GM10248 (cell line): ENCODE measurements at regions of chr3 and their contacts with region 1.

Region 1: GRCh38 chr3:196528639-196529233 is 13.6 kb upstream of the SMCO1 start:
- DNase-seq: peak; percentile 91
- CTCF ChIP-seq: peak; percentile 82

Region 2: GRCh38 chr3:196251918-196252317 is 276.8 kb before region 1 on chr3:
- CTCF ChIA-PET with region 1: interaction called, 14 read pairs
- POLR2A ChIA-PET with region 1: no interaction called
- DNase-seq: no peak
- CTCF ChIP-seq: no peak

Region 3: DNA sequence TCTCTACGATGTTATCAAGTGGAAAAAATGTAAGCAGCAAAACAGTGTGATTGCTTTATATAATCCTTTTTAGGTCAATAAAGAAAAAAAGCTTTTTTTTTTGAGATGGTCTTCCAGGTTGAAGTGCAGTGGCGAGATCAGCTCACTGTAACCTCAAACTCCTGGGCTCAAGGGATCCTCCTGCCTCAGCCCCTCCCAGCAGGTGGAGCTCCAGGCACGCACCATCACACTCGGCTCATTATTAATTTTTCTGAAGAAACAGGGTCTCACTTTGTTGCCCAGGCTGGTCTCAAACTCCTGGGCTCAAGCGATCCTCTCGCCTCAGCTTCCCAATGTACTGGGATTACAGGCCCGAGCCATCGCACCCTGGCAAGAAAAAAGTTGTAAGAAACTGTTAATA is 42.5 kb before region 1 on chr3:
- CTCF ChIA-PET with region 1: interaction called, 11 read pairs
- POLR2A ChIA-PET with region 1: no interaction called
- DNase-seq: no peak
- CTCF ChIP-seq: peak; percentile 56

Region 4: DNA sequence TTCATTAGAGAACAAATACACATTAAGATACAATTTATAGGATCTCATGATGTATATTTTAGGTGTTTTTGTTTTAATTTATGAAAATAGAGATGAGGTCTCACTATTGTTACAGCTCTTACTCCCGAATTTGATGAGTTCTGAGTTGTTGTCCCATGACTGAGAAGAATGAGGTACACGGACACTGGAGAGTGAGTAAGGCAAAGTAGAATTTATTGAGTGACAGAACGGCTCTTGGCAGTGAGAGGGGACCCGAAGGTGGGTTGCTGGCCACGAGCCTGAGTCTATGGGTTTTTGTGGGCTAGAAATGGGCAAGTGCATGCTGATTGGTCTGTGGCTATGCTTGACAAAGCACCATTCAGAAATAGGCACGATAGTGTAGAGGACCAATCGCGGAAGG is 22.0 kb before region 1 on chr3:
- CTCF ChIA-PET with region 1: interaction called, 30 read pairs
- POLR2A ChIA-PET with region 1: interaction called, 4 read pairs
- DNase-seq: no peak
- CTCF ChIP-seq: no peak

Region 5: GRCh38 chr3:196513697-196514349 is 14.9 kb before region 1 on chr3:
- CTCF ChIA-PET with region 1: interaction called, 13 read pairs
- POLR2A ChIA-PET with region 1: no interaction called
- DNase-seq: no peak
- CTCF ChIP-seq: no peak

Region 6: DNA sequence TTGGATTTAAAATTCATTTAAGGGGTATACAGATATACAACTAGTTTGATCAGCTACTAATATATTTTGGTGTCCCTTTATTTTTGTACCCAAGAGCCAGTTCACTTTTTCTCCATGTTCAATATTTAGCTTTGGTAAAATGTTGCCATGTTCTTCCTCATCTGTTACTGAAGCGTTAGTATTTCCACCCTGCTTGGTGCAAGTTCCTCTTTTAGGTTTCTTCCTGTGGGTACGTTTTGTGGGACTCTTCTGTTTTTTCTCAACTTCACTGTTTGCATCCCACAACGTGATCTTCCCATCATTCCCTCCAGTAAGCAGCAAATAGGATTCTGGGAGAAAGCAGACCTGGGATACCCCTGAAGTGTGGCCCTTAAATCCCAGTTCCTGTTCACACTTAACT is 25.5 kb after region 1 on chr3:
- CTCF ChIA-PET with region 1: interaction called, 16 read pairs
- POLR2A ChIA-PET with region 1: no interaction called
- DNase-seq: no peak
- CTCF ChIP-seq: no peak

Region 7: DNA sequence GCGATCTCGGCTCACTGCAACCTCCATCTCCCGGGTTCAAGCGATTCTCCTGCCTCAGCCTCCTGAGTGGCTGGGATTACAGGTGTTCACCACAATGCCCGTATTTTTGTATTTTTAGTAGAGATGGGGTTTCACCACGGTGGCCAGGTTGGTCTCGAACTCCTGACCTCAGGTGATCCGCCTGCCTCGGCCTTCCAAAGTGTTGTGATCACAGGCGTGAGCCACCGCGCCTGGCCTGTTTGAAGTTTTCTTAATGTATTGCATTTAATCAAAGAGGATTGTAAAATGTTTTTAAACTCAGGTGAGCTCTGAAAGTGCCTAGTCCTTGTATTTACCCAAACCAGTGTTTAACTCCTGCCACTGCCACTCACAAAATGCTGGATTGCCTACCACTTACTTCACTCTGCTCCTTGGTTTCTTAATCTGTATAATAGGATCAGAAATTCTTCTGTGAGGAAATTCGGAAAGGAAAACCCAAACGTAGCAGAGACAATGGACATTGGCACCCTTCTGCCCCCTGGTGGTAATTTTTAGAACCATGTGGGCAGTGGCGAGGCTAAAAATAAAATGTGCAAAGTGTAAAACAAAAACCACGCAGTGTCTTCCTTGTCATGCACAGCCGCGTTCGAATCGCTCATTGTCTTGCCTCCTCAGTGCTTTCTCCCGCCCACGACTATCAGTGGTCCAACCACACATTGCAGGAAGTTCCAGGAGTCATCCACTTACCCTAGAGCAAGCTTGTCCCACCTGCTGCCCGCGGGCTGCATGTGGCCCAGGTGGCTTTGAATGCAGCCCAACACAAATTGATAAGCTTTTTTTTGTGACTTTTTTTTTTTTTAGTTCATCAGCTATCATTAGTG is 156.0 kb after region 1 on chr3:
- CTCF ChIA-PET with region 1: interaction called, 17 read pairs
- POLR2A ChIA-PET with region 1: no interaction called
- DNase-seq: peak; percentile 82
- CTCF ChIP-seq: peak; percentile 76

Region 8: GRCh38 chr3:196699749-196700148 is 171.0 kb after region 1 on chr3:
- CTCF ChIA-PET with region 1: no interaction called
- POLR2A ChIA-PET with region 1: no interaction called
- DNase-seq: no peak
- CTCF ChIP-seq: no peak

Region 9: GRCh38 chr3:196739671-196740480 is 211.1 kb after region 1 on chr3 and contains the start of gene PAK2:
- CTCF ChIA-PET with region 1: no interaction called
- POLR2A ChIA-PET with region 1: no interaction called
- DNase-seq: peak; percentile 95
- CTCF ChIP-seq: no peak